SK-N-SH (cell line): ENCODE measurements at regions of chr5 and their contacts with region 1.

Region 1: DNA sequence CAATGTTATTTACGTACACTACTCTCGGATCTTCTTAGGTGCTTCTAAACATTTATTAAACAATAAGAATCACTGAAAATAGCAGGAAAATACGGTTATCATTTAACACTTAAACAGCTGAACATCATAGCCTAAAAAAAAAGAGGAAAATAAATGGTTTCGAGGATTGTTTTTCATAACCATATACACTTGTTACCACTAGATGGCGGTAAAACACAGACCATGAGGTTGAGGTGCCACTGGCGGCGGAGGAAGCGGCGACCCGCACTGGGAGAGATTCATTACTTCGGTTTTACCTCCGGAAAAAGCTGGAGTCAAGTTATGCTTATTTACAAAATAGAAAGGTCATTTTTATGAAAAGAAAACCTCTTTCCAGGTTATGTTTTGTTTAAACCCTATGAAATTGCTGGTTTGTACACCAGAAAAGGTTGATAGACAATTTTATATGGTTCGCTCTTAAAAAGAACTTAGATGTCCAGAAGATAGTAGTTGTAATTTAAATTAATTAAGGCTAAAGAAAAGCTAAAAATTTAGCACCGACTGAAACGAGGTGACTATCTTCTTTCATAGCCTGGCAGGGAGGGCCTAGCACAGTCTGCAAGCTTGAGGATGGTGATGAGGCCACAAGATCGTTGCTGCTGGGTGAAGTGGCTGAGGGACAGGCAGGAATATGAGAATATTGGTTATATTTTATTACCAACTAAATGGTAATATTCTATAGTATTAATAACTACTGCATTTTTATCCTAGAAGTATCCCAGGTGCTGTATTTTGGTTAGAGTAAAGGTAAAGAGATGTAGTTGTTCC is 605.7 kb downstream of the RAB3C start:
- DNase-seq: peak; percentile 52
- H3K4me3 ChIP-seq: peak overlapping the region in 1 of 2 experiments; percentile 29; a peak in 3 of 4 replicates
- H3K27ac ChIP-seq: peak overlapping the region in 1 of 2 experiments; percentile 50; a peak in 1 of 4 replicates
- H3K4me1 ChIP-seq: peaks cover 0 to 4% of the 10 kb centered on the region in 2 experiments; a peak in 2 of 4 replicates
- H3K27me3 ChIP-seq: no peaks in the 10 kb centered on the region
- CTCF ChIP-seq: peak; percentile 81
- EP300 ChIP-seq: no peak
- RAD21 ChIP-seq: peak; percentile 97

Region 2: GRCh38 chr5:58849921-58850667 is 338.5 kb before region 1 on chr5:
- CTCF ChIA-PET with region 1: no interaction called
- POLR2A ChIA-PET with region 1: no interaction called
- DNase-seq: peak; percentile 49
- H3K4me3 ChIP-seq: no peak overlapping the region
- H3K27ac ChIP-seq: peak overlapping the region in 1 of 2 experiments; percentile 93; a peak in 2 of 4 replicates
- H3K4me1 ChIP-seq: peaks cover 0 to 11% of the 10 kb centered on the region in 2 experiments; a peak in 2 of 4 replicates
- H3K27me3 ChIP-seq: 0 out of 2 replicates have a peak, but pooled peaks cover 8% of the 10 kb centered on the region
- CTCF ChIP-seq: peak; percentile 59
- EP300 ChIP-seq: peak in 1 of 2 experiments; percentile 24; a peak in 1 of 4 replicates
- RAD21 ChIP-seq: peak; percentile 85

Region 3: DNA sequence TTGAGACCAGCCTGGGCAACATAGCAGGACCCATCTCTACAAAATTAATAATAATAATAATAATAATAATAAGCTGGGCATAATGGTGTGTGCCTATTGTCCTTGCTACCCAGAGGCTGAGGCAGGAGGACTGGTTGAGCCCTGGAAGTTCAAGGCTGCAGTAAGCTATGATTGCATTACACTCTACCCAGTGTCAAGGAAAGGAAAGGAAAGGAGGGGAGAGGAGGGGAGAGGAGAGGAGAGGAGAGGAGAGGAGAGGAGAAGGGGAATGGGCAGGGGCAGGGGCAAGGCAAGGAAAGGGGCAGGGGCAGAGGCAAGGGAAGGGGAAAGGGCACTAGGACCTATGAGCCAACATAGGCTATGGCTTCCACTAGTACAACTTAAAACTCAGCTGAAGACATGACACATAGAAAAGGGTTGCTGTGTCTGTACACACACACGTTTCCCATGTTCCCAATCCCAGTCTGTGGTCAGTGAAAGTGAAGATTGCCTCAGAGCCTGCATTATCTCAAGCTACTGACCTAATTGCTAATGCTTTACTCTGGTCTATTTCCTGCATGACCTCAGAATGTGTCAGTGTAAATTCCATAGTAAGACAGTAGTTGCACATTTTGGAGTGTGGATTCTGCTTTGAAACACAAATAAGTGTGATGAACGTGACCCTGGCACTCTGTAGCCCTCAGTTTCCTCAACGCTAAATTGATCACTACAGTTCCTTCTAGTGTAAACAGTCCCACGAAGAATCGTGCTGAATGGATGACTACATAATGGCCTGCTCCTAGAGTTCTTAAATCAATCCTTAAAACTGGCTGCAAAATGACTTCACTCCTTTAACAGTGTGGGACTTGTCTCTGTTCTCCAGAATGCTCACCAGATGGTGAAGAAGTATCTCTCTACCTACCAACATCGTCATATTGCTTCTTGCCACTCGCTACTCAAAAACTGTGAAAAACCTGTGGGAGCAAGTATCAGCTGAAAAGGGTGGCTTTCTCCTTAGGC is 108.7 kb before region 1 on chr5:
- CTCF ChIA-PET with region 1: no interaction called
- POLR2A ChIA-PET with region 1: no interaction called
- DNase-seq: no peak
- H3K4me3 ChIP-seq: no peak overlapping the region
- H3K27ac ChIP-seq: no peak overlapping the region; a peak in 2 of 4 replicates
- H3K4me1 ChIP-seq: peaks cover 0 to 8% of the 10 kb centered on the region in 2 experiments; a peak in 1 of 4 replicates
- H3K27me3 ChIP-seq: no peaks in the 10 kb centered on the region
- CTCF ChIP-seq: no peak
- EP300 ChIP-seq: no peak
- RAD21 ChIP-seq: no peak

Region 4: GRCh38 chr5:59174248-59174844 is 14.3 kb before region 1 on chr5:
- CTCF ChIA-PET with region 1: interaction called, 76 read pairs
- POLR2A ChIA-PET with region 1: no interaction called
- DNase-seq: peak; percentile 54
- H3K4me3 ChIP-seq: peak overlapping the region in 1 of 2 experiments; percentile 51; a peak in 1 of 4 replicates
- H3K27ac ChIP-seq: no peak overlapping the region
- H3K4me1 ChIP-seq: peaks cover 0 to 5% of the 10 kb centered on the region in 2 experiments; a peak in 2 of 4 replicates
- H3K27me3 ChIP-seq: no peaks in the 10 kb centered on the region
- CTCF ChIP-seq: peak; percentile 97
- EP300 ChIP-seq: no peak
- RAD21 ChIP-seq: peak; percentile 93

Region 5: DNA sequence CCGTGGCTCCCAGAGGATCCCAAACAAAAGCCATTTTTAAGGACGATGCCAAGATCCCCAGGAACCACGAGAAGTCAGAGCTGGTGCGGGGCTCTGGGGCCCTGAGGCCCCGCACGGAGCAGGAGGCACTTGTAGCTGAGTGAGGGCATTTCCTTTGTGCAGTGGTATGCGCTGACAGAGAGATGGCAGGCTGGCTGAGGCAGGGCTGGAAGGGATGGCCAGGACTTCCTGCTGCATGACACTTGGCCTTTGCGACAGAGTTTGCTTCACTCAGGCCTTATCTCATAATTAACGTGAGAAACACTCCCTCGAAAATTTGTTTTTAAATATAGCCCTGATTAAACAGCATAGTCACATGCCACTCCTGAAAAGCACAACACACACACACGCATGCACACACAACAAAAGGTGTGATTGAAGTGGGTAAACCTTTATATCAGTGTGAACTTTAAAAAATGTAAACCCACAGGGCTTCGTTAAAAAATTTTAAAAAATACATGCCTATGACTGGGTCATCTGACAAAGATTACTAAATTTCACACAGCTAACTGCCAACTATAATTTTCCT is 168.3 kb after region 1 on chr5:
- CTCF ChIA-PET with region 1: interaction called, 21 read pairs
- POLR2A ChIA-PET with region 1: no interaction called
- DNase-seq: no peak
- H3K4me3 ChIP-seq: no peak overlapping the region
- H3K27ac ChIP-seq: no peak overlapping the region
- H3K4me1 ChIP-seq: peaks cover 0 to 13% of the 10 kb centered on the region in 2 experiments; a peak in 2 of 4 replicates
- H3K27me3 ChIP-seq: no peaks in the 10 kb centered on the region
- CTCF ChIP-seq: no peak
- EP300 ChIP-seq: no peak
- RAD21 ChIP-seq: no peak

Region 6: GRCh38 chr5:59390074-59390659 is 201.5 kb after region 1 on chr5:
- CTCF ChIA-PET with region 1: interaction called, 44 read pairs
- POLR2A ChIA-PET with region 1: no interaction called
- DNase-seq: no peak
- H3K4me3 ChIP-seq: no peak overlapping the region
- H3K27ac ChIP-seq: no peak overlapping the region
- H3K4me1 ChIP-seq: no peaks in the 10 kb centered on the region; a peak in 1 of 4 replicates
- H3K27me3 ChIP-seq: no peaks in the 10 kb centered on the region
- CTCF ChIP-seq: peak; percentile 88
- EP300 ChIP-seq: no peak
- RAD21 ChIP-seq: peak; percentile 78

Region 7: DNA sequence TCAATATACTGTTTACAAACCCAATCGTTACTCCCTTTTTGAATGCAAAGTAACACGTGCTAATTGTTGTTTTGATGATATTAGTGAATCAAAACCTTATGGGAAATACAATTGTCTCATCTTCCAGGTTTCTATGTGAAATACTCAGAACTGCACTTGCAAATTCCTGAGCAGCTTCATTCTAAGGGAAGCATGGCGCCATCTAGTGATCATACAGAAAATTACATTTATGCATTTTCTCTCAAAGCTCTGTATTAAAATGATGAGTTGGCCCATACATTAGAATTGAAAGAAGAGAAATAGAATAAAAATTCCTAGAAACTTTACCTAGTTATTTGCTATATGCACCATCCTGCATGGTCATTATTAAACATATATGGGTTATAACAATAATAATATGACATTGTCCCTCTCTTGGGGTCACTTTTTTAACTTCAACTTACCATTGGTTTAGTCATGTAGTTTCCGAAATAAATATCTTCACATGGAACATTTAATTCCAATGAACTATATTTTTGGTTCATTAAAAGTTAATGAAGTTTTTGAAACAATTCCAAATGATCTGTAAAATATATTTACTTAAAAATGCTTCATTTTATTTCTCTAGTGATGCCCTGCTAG is 484.9 kb after region 1 on chr5:
- CTCF ChIA-PET with region 1: interaction called, 23 read pairs
- POLR2A ChIA-PET with region 1: no interaction called
- DNase-seq: peak; percentile 24
- H3K4me3 ChIP-seq: no peak overlapping the region; a peak in 1 of 4 replicates
- H3K27ac ChIP-seq: no peak overlapping the region
- H3K4me1 ChIP-seq: peaks cover 2 to 4% of the 10 kb centered on the region in 2 experiments; a peak in 3 of 4 replicates
- H3K27me3 ChIP-seq: no peaks in the 10 kb centered on the region
- CTCF ChIP-seq: peak; percentile 89
- EP300 ChIP-seq: no peak
- RAD21 ChIP-seq: peak; percentile 90